Mucosa of descending colon (tissue), 3 donors: ENCODE measurements at regions of chr20 and their contacts with region 1.

Region 1: DNA sequence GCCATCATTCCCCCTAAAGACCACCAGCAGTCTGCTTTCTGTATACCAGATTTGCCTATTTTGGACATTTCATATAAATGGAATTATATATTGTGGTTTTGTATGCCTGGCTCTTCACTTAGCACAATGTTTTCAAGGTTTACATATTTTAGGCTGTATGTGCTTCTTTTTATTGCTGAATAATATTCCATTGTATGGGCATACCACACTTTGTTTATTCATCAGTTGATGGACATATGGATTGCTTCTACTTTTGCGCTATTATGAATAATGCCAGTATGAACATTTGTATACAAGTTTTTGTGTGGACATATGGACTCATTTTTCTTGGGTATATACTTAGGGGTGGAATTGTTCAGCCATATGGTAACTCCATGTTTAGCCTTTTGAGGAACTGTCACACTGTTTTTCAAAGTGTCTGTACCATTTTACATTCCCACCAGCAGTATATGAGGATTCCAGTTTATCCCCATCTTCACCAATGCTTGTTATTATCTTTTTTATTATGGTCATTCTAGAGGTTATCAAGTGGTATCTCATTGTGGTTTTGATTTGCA is 12.7 kb downstream of the L3MBTL1 start:
- DNase-seq: no peak
- ATAC-seq: no peak
- H3K4me3 ChIP-seq: no peak overlapping the region
- H3K4me1 ChIP-seq: no peaks in the 10 kb centered on the region
- CTCF ChIP-seq: no peak

Region 2: DNA sequence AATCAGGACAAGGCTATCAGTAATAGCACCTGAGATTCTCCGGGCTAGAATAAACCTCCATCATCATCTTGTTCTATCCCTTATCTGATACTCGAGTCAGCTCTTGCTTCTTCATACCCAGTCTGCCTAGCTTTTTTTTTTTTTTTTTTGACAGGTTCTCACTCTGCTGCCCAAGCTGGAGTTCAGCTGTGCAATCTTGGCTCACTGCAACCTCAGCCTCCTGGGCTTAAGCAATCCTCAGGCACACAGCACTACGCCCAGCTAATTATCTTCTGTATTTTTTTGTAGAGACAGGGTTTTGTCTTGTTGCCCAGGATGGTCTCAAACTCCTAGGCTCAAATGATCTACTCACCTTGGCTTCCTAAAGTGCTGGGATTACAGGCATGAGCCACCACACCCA is 43.0 kb before region 1 on chr20:
- intact Hi-C with region 1: loop called in 1 of 2 experiments (anchors 2 kb)
- DNase-seq: no peak
- ATAC-seq: no peak
- H3K4me3 ChIP-seq: no peak overlapping the region
- H3K4me1 ChIP-seq: no peaks in the 10 kb centered on the region
- CTCF ChIP-seq: no peak

Region 3: DNA sequence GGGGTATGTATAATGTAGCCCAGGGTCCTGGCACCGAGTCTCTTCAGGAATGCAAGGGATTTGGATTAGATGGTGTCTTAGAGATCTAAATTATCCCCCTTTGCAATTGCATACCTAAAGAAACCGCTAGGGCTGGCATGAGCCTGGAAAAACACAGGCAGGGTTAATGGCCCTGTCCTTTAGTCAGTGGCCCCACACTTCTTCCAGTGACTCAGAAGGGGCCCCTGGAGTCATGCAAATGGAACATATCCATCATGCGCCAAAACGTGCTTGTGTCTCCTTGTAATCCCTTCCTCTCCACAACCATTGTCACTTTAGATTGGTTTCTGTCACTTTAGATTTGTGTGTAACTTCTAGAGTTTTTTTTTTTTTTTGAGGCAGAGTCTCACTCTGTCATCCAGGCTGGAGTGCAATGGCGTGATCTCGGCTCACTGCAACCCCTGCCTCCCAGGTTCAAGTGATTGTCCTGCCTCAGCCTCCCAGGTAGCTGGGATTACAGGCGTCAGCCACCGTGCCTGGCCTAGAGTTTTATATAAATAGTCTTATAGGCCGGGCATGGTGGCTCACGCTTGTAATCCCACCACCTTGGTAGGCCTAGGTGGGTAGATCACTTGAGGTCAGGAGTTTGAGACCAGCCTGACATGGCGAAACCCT is 138.0 kb after region 1 on chr20:
- intact Hi-C with region 1: no loop called
- DNase-seq: no peak
- ATAC-seq: peak; percentile 16
- H3K4me3 ChIP-seq: no peak overlapping the region
- H3K4me1 ChIP-seq: peaks cover 4% of the 10 kb centered on the region
- CTCF ChIP-seq: no peak